ENCODE measurements at regions of chr20 and their contacts with region 1.

Region 1: DNA sequence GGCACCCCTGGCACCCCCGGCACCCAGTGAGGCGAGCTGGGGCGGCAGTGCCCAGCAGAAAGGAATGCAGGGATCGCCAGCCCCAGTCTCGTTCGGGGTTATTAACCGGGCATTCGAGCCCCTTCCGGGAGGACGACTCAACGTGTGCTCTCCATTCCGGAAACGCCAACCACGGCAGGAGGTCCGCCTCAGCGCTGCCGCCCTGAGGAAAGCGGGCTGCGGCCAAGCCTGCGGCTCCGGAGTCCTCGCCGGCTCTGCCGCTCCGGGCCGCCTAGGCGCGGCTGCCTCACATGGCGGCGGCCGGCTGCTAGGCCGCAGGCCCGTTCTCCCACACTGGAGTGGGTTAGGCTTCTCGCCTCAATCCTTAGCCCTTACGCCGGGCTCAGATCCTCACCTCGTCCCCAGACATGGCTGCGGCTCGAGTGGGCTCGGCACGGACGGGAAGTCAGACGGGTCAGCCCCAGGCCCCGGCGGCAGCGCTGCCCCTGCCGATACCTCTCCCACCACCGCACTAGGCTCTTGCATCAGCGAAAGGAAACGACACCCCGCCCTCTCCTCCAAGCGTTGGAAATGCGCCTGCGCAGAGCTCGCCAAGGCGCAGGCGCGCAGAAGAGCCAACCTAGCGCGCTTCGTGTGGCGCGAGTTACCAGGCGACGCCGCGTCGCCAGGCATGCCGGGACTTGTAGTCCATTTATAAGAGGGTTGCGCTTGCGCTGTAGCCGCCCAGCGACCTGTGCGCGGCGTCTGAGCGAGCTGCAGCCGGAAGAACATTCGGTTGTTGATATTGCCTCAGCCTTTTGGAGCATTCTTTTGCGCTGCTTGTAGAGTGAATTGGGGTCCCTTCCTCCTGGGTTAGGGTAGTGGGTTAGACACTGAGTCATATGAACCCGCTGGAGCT is at the start of gene EIF2S2:
- DNase-seq: peak; percentile 88 to 97 (median 95)
- ATAC-seq: peak; percentile 95
- H3K4me3 ChIP-seq: peak within 1 kb of the TSS; percentile 92
- H3K4me3 Mint-ChIP-seq: peak within 1 kb of the TSS; percentile 87 to 98 (median 96)
- H3K27ac ChIP-seq: peak within 1 kb of the TSS; percentile 89
- H3K27ac Mint-ChIP-seq: peak within 1 kb of the TSS; percentile 96 to 99 (median 98)
- H3K4me1 ChIP-seq: peaks cover 24 to 34% of the 10 kb centered on the region in 2 donors
- H3K4me1 Mint-ChIP-seq: peaks cover 34 to 53% (median 47%) of the 10 kb centered on the region in 7 donors
- H3K27me3 ChIP-seq: no peaks in the 10 kb centered on the region
- H3K27me3 Mint-ChIP-seq: peaks cover 0 to 15% (median 0%) of the 10 kb centered on the region in 5 donors
- total RNA-seq, gene EIF2S2: 16.8 to 68.4 (median 48.6) TPM

Region 2: GRCh38 chr20:33443512-33444239 is 668.3 kb before region 1 on chr20 and contains the start of gene SNTA1:
- CTCF ChIA-PET with region 1: no interaction called
- POLR2A ChIA-PET with region 1: interaction called, 3 read pairs
- intact Hi-C with region 1: loop called in 1 of 2 experiments (anchors 1 kb)
- DNase-seq: peak; percentile 51 to 90 (median 70)
- ATAC-seq: peak; percentile 84
- H3K4me3 ChIP-seq: peak within 1 kb of the TSS; percentile 96
- H3K4me3 Mint-ChIP-seq: peak within 1 kb of the TSS; percentile 82 to 96 (median 92)
- H3K27ac ChIP-seq: peak within 1 kb of the TSS; percentile 62
- H3K27ac Mint-ChIP-seq: peak within 1 kb of the TSS; percentile 69 to 95 (median 90)
- H3K4me1 ChIP-seq: peaks cover 10 to 11% of the 10 kb centered on the region in 2 donors
- H3K4me1 Mint-ChIP-seq: peaks cover 16 to 32% (median 22%) of the 10 kb centered on the region in 7 donors
- H3K27me3 ChIP-seq: no peaks in the 10 kb centered on the region
- H3K27me3 Mint-ChIP-seq: peaks cover 0 to 19% (median 0%) of the 10 kb centered on the region in 5 donors
- total RNA-seq, gene SNTA1: 2.0 to 3.2 (median 2.9) TPM

Region 3: DNA sequence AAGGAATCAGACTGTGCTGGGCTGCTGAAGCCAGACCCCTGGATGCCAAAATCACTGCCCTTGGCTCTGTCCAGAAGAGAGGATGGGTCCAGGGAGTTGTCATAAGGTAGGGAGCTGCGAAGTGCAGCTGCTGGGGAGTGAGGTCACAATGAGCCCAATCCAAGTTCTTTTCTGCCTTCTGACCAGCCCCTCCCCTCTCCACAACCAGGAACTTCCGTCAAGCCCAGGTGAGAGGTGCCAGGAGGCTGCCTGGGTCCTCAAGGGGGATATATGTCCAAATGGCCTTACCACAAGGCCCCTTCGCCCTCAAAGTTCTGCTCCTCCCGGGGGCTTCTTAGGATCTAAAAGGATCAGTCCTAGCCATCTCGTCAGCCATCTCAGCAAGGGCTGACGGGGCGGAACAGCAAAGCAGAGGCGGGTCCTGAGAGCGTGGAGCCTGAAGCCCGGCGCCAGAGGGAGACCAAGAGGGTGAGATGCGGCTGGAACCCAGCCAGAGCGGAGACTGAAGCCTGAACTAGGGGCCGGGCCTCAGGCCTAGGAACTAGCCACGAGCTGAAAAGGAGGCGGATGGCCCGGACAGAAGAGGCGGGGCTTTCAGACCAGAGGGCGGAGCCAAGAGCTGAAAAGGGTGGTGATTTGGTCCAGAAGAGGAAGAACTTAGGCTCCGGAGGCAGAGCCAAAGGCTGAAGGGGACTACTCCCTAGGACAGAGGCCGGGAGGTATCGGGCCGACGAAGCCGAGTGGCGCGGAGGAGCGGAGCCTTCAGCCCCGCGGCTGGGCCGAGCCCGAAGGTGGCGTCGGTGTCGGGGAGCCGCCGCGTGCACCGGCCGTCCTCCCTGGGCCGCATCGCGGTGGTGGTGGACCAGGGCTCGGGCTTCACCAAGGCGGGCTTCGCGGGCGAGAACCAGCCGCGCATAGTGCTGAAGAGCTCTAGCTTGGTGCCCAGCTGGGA is 445.4 kb before region 1 on chr20 and contains the start of gene ACTL10:
- CTCF ChIA-PET with region 1: no interaction called
- POLR2A ChIA-PET with region 1: interaction called, 3 read pairs
- intact Hi-C with region 1: loop called (anchors 5 kb)
- DNase-seq: peak; percentile 45 to 86 (median 60)
- ATAC-seq: peak; percentile 79
- H3K4me3 ChIP-seq: peak within 1 kb of the TSS; percentile 79
- H3K4me3 Mint-ChIP-seq: peak within 1 kb of the TSS; percentile 95 to 100 (median 98)
- H3K27ac ChIP-seq: peak within 1 kb of the TSS; percentile 60
- H3K27ac Mint-ChIP-seq: peak within 1 kb of the TSS; percentile 90 to 98 (median 95)
- H3K4me1 ChIP-seq: peaks cover 19 to 21% of the 10 kb centered on the region in 2 donors
- H3K4me1 Mint-ChIP-seq: peaks cover 21 to 54% (median 35%) of the 10 kb centered on the region in 7 donors
- H3K27me3 ChIP-seq: no peaks in the 10 kb centered on the region
- H3K27me3 Mint-ChIP-seq: no peaks in the 10 kb centered on the region
- total RNA-seq, gene ACTL10: 0.66 to 4.9 (median 3.2) TPM

Region 4: DNA sequence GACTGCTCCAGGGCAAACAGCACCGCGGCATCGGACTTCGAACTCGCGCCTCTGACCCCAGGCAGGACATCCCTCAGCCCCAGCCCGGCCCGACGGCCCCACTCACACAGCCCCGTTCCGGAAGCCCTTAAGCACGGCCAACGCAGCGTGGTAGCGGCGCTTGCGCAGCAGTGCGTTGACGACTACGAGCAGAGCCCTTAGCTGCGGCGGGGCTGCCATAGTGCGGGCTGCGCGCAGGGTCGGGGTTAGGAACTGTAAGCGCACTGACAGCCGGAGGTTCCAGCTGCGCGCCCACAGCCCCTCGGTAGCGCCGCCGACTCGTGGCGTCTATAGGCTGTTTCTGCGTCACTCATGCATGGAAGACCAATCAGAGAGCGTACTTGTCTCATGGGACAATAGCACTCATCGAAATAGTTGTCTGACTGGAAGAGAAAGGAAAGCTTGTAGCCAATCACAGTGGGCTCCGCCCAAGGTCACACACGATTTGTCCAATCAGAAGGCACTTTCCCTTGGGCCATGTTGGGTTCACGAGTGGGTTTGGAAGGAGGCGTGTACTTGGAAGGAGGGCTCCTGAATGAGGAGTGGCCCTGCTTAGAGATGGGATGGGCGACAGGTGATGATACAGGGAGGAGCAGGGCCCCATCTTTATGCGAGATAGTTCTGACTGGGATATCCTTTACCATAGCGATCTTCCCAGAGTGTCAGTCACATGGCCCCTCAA is 391.8 kb before region 1 on chr20 and contains the start of gene PXMP4:
- CTCF ChIA-PET with region 1: no interaction called
- POLR2A ChIA-PET with region 1: interaction called, 3 read pairs
- intact Hi-C with region 1: loop called in 1 of 2 experiments (anchors 1 kb)
- DNase-seq: peak; percentile 60 to 97 (median 94)
- ATAC-seq: peak; percentile 98
- H3K4me3 ChIP-seq: peak within 1 kb of the TSS; percentile 87
- H3K4me3 Mint-ChIP-seq: peak within 1 kb of the TSS; percentile 81 to 95 (median 90)
- H3K27ac ChIP-seq: peak within 1 kb of the TSS; percentile 74
- H3K27ac Mint-ChIP-seq: peak within 1 kb of the TSS; percentile 81 to 97 (median 87)
- H3K4me1 ChIP-seq: peaks cover 0 to 22% of the 10 kb centered on the region in 2 donors
- H3K4me1 Mint-ChIP-seq: peaks cover 22 to 36% (median 27%) of the 10 kb centered on the region in 7 donors
- H3K27me3 ChIP-seq: no peaks in the 10 kb centered on the region
- H3K27me3 Mint-ChIP-seq: no peaks in the 10 kb centered on the region
- total RNA-seq, gene PXMP4: 4.5 to 14.3 (median 10.1) TPM

Region 5: DNA sequence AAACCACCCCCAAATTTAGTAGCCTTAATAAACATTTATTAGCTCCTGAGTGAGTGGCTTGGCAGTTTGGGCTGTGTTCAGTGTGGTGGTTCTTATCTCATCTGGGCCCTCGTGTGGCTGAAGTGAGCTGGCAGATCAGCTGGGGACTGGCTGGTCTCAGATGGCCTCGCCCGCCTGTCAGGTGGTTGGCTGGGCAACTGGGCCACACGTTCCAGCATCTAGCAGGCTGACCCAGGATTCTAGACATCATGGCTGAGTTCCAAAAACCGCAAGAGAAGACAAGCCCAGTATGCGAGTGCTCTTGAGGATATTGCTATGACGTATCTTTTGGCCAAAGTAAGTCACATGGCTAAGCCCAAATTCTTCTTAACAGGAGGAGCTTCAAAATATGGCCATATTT is 28.8 kb before region 1 on chr20:
- CTCF ChIA-PET with region 1: no interaction called
- POLR2A ChIA-PET with region 1: no interaction called
- intact Hi-C with region 1: no loop called
- DNase-seq: no peak
- ATAC-seq: peak; percentile 30
- H3K4me3 ChIP-seq: no peak overlapping the region
- H3K4me3 Mint-ChIP-seq: no peak overlapping the region
- H3K27ac ChIP-seq: no peak overlapping the region
- H3K27ac Mint-ChIP-seq: peak overlapping the region in 7 of 9 donors; percentile 27 to 82 (median 65)
- H3K4me1 ChIP-seq: no peaks in the 10 kb centered on the region
- H3K4me1 Mint-ChIP-seq: peaks cover 1 to 27% (median 18%) of the 10 kb centered on the region in 7 donors
- H3K27me3 ChIP-seq: no peaks in the 10 kb centered on the region
- H3K27me3 Mint-ChIP-seq: no peaks in the 10 kb centered on the region

Region 6: GRCh38 chr20:34096699-34097420 is 15.1 kb before region 1 on chr20:
- CTCF ChIA-PET with region 1: interaction called, 6 read pairs
- POLR2A ChIA-PET with region 1: interaction called, 7 read pairs
- intact Hi-C with region 1: loop called (anchors 1 to 2 kb)
- DNase-seq: no peak
- ATAC-seq: no peak
- H3K4me3 ChIP-seq: no peak overlapping the region
- H3K4me3 Mint-ChIP-seq: no peak overlapping the region
- H3K27ac ChIP-seq: no peak overlapping the region
- H3K27ac Mint-ChIP-seq: peak overlapping the region in 6 of 9 donors; percentile 42 to 72 (median 50)
- H3K4me1 ChIP-seq: no peaks in the 10 kb centered on the region
- H3K4me1 Mint-ChIP-seq: peaks cover 3 to 26% (median 8%) of the 10 kb centered on the region in 7 donors
- H3K27me3 ChIP-seq: no peaks in the 10 kb centered on the region
- H3K27me3 Mint-ChIP-seq: no peaks in the 10 kb centered on the region

Region 7: DNA sequence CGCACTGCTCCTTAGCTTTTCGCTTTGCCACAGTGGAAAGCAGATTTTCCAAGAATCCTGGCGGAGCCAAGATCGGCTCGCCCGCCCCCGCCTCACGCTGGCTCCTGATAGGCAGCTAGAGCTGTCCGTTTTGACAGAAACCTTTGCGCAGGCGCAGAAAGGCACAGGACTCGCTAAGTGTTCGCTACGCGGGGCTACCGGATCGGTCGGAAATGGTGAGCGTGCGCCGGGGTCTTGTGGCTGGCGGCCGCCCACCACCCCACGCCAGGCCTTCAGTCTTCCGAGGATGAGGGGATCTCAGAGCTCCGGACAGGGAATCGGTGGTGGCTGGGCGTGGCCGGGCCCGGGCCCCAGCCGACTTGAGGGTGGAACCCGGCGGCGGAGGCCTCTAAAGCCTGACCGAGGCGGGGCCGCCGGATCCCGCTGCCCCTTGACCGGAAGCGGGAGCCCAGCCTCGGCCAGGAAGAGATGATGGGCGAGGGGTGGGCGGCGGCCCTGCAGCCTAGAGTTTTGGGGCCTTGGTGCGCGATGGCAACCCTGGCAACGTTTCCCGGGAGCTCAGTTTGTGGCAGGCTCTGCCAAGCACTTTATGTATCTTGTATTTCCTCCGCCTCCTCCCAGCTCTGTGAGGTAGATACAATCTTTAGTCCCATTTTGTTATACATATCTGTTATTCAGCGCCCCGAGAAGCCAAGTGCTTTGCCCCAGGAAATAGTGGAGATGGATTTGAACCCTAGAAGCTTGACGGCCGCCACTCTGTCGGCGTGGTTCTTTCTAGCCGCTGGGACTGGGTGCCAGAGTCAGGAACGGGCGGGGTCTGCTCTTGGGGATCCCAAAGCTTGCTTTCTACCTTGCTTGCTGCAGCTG is 404.5 kb after region 1 on chr20 and contains the start of gene DYNLRB1:
- CTCF ChIA-PET with region 1: no interaction called
- POLR2A ChIA-PET with region 1: interaction called, 9 read pairs
- intact Hi-C with region 1: loop called in 1 of 2 experiments (anchors 1 kb)
- DNase-seq: peak; percentile 87 to 94 (median 92)
- ATAC-seq: peak; percentile 88
- H3K4me3 ChIP-seq: peak within 1 kb of the TSS; percentile 96
- H3K4me3 Mint-ChIP-seq: peak within 1 kb of the TSS; percentile 97 to 100 (median 99)
- H3K27ac ChIP-seq: peak within 1 kb of the TSS; percentile 86
- H3K27ac Mint-ChIP-seq: peak within 1 kb of the TSS; percentile 94 to 99 (median 97)
- H3K4me1 ChIP-seq: peaks cover 8 to 11% of the 10 kb centered on the region in 2 donors
- H3K4me1 Mint-ChIP-seq: peaks cover 12 to 59% (median 51%) of the 10 kb centered on the region in 7 donors
- H3K27me3 ChIP-seq: no peaks in the 10 kb centered on the region
- H3K27me3 Mint-ChIP-seq: no peaks in the 10 kb centered on the region
- total RNA-seq, gene DYNLRB1: 45.9 to 91.9 (median 60.7) TPM

Measured in naive thymus-derived CD4-positive, alpha-beta T cell (primary cell).